ENCODE measurements at regions of chr12 and their contacts with region 1.

Region 1: GRCh38 chr12:810671-811415 is 58.5 kb downstream of the WNK1 start:
- DNase-seq: peak; percentile 23
- ATAC-seq: no peak
- H3K4me3 ChIP-seq: no peak overlapping the region
- H3K27ac ChIP-seq: no peak overlapping the region
- H3K4me1 ChIP-seq: peaks cover 5% of the 10 kb centered on the region
- H3K27me3 ChIP-seq: no peaks in the 10 kb centered on the region
- CTCF ChIP-seq: no peak
- POLR2A ChIP-seq: no peak
- RAD21 ChIP-seq: no peak

Region 2: GRCh38 chr12:569803-570434 is 240.9 kb before region 1 on chr12:
- CTCF ChIA-PET with region 1: interaction called, 4 read pairs
- POLR2A ChIA-PET with region 1: no interaction called
- dilution Hi-C with region 1: no loop called
- in situ Hi-C with region 1: loop called (anchors 5 kb)
- intact Hi-C with region 1: loop called (anchors 1 kb)
- DNase-seq: peak; percentile 70
- ATAC-seq: peak; percentile 81
- H3K4me3 ChIP-seq: peak overlapping the region; percentile 65
- H3K27ac ChIP-seq: peak overlapping the region; percentile 60
- H3K4me1 ChIP-seq: peaks cover 14% of the 10 kb centered on the region
- H3K27me3 ChIP-seq: peaks cover 15% of the 10 kb centered on the region
- CTCF ChIP-seq: peak; percentile 94
- POLR2A ChIP-seq: no peak; the same call in 1 of the 2 replicates
- RAD21 ChIP-seq: peak; percentile 92

Region 3: GRCh38 chr12:622416-622815 is 188.4 kb before region 1 on chr12:
- CTCF ChIA-PET with region 1: no interaction called
- POLR2A ChIA-PET with region 1: no interaction called
- dilution Hi-C with region 1: no loop called
- in situ Hi-C with region 1: no loop called
- intact Hi-C with region 1: no loop called
- DNase-seq: no peak
- ATAC-seq: no peak
- H3K4me3 ChIP-seq: no peak overlapping the region
- H3K27ac ChIP-seq: no peak overlapping the region
- H3K4me1 ChIP-seq: peaks cover 2% of the 10 kb centered on the region; the same call in 1 of the 2 replicates
- H3K27me3 ChIP-seq: peaks cover 29% of the 10 kb centered on the region
- CTCF ChIP-seq: no peak
- POLR2A ChIP-seq: no peak
- RAD21 ChIP-seq: no peak

Region 4: DNA sequence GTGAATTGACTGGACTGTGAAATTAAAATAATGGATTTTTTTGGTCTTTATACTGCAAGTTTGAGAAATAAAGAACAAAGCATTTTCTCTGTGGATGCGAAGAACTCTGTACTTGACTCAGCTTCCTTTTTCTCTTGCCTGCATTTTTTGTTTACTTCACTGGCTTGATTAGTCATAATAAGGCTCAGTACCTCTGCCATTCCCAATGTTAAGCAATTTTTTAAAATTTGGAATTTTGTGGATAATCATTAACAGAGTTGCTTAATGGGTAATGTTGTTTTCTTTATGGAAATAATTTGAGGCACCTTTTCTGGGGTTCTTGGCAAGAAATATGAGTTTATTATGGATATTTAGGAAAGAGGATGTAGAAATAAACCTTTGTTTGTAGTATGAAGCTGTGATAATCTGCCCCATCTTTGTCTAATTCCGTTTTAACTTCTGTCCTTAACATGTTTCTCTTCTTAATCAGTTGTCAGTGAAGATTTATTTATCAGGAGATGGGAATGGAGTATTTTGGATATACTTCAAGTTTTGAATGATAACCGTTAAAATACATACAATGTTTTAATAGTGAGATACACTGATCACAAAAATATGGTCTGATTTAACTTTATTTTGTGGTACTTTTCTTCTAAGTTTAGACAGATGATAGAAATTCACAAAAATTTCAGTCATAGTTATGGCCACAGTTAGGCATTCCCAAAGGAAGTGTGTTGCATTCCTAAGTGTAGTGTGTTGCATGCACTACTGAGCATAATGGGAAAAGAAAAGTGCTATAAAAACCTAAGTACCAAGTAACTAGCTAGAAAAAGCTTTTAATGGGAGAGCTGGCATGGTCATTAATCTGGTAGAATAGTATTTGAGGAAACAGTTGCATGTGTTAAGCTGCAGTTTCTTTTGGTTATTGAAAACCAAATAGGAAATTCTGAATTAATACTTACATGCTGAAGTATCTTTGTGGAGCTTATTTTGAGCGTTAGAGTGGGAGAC is 30.8 kb before region 1 on chr12:
- CTCF ChIA-PET with region 1: interaction called, 4 read pairs
- POLR2A ChIA-PET with region 1: no interaction called
- dilution Hi-C with region 1: no loop called
- in situ Hi-C with region 1: no loop called
- intact Hi-C with region 1: loop called (anchors 5 kb)
- DNase-seq: peak; percentile 74
- ATAC-seq: peak; percentile 86
- H3K4me3 ChIP-seq: no peak overlapping the region; the same call in 1 of the 2 replicates
- H3K27ac ChIP-seq: peak overlapping the region; percentile 74
- H3K4me1 ChIP-seq: peaks cover 3% of the 10 kb centered on the region; the same call in 1 of the 2 replicates
- H3K27me3 ChIP-seq: no peaks in the 10 kb centered on the region
- CTCF ChIP-seq: no peak
- POLR2A ChIP-seq: no peak
- RAD21 ChIP-seq: no peak